Activated CD4-positive, alpha-beta memory T cell treated with anti-CD3 and anti-CD28 coated beads for 36 hours (primary cell): ENCODE measurements at regions of chr3 and their contacts with region 1.

Region 1: DNA sequence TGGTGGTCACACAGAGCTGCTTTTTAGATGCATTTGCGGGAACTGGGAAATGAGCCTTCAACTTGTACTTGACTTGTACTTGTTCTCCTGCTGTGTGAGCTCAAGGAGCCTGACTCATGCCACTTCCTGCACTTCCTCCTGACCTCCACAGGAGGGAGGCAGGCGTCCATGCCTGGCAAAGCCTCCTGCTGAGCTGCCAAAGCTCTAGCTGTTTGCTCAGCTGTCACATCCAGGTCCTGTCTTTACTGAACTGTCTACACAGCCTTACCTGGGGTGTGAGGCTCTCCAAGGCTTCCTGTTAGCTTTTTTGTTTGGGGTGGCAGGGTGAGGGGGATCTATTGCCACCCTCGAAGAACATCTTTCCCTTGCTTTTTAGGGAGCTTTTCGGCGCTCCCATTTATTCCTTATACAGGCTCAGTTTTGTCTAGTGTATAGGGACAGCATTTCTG is 6.4 kb downstream of the THPO start:
- DNase-seq: peak; percentile 76
- H3K4me3 Mint-ChIP-seq: no peak overlapping the region
- H3K27ac Mint-ChIP-seq: no peak overlapping the region
- H3K4me1 Mint-ChIP-seq: peaks cover 15% of the 10 kb centered on the region
- H3K27me3 Mint-ChIP-seq: peaks cover 4% of the 10 kb centered on the region

Region 2: GRCh38 chr3:184354121-184354728 is 17.4 kb before region 1 on chr3:
- CTCF ChIA-PET with region 1: interaction called, 22 read pairs
- POLR2A ChIA-PET with region 1: no interaction called
- intact Hi-C with region 1: no loop called
- DNase-seq: peak; percentile 74
- H3K4me3 Mint-ChIP-seq: no peak overlapping the region
- H3K27ac Mint-ChIP-seq: no peak overlapping the region
- H3K4me1 Mint-ChIP-seq: no peaks in the 10 kb centered on the region
- H3K27me3 Mint-ChIP-seq: no peaks in the 10 kb centered on the region

Region 3: GRCh38 chr3:184417619-184418327 is 46.2 kb after region 1 on chr3:
- CTCF ChIA-PET with region 1: interaction called, 9 read pairs
- POLR2A ChIA-PET with region 1: no interaction called
- intact Hi-C with region 1: loop called (anchors 5 kb)
- DNase-seq: peak; percentile 79
- H3K4me3 Mint-ChIP-seq: no peak overlapping the region
- H3K27ac Mint-ChIP-seq: no peak overlapping the region
- H3K4me1 Mint-ChIP-seq: no peaks in the 10 kb centered on the region
- H3K27me3 Mint-ChIP-seq: no peaks in the 10 kb centered on the region

Region 4: DNA sequence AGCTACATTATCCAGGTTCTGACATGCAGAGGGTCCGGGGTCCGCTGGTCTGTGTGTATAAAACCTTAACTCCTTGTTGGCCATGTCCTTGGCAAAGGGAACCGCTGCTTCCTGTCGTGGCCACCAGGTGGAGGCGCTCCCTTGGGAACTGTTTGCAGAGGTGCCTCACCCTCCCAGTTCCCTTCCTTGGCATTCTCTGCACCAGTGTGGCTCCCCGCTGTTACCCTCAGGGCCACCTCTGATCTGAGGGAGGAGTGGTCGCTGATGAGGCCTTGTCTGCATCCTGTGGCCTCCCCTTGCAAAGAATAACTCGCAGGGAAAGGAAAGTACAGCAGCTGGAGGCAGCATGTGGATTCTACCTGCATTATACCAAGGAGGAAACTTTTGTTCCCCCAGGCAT is 97.8 kb after region 1 on chr3:
- CTCF ChIA-PET with region 1: interaction called, 17 read pairs
- POLR2A ChIA-PET with region 1: no interaction called
- intact Hi-C with region 1: loop called (anchors 2 kb)
- DNase-seq: peak; percentile 64
- H3K4me3 Mint-ChIP-seq: no peak overlapping the region
- H3K27ac Mint-ChIP-seq: no peak overlapping the region
- H3K4me1 Mint-ChIP-seq: peaks cover 6% of the 10 kb centered on the region
- H3K27me3 Mint-ChIP-seq: peaks cover 20% of the 10 kb centered on the region

Region 5: DNA sequence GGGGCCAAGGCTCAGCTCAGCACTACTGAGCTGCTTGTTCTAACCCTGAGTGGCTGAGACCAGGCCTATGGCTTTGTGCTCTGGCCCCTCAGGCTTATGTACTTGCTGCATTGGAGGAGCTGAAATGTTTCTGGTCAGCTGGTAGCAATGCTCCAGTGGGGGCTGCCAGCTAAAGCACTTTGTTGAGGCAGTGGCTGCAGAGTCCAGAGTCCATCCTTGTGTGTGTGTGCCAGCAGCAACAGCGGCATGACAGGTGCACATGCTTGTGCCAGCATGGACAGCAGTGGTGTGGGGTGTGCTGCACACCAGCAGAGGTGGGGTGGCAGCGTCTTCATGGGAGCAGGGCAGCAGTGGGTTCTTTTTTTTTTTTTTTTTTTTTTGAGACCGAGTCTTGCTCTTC is 609.5 kb after region 1 on chr3:
- CTCF ChIA-PET with region 1: no interaction called
- POLR2A ChIA-PET with region 1: no interaction called
- intact Hi-C with region 1: no loop called
- DNase-seq: no peak
- H3K4me3 Mint-ChIP-seq: no peak overlapping the region
- H3K27ac Mint-ChIP-seq: no peak overlapping the region
- H3K4me1 Mint-ChIP-seq: no peaks in the 10 kb centered on the region
- H3K27me3 Mint-ChIP-seq: no peaks in the 10 kb centered on the region